Common myeloid progenitor, CD34-positive (primary cell): ENCODE measurements at regions of chr9 and their contacts with region 1.

Region 1: DNA sequence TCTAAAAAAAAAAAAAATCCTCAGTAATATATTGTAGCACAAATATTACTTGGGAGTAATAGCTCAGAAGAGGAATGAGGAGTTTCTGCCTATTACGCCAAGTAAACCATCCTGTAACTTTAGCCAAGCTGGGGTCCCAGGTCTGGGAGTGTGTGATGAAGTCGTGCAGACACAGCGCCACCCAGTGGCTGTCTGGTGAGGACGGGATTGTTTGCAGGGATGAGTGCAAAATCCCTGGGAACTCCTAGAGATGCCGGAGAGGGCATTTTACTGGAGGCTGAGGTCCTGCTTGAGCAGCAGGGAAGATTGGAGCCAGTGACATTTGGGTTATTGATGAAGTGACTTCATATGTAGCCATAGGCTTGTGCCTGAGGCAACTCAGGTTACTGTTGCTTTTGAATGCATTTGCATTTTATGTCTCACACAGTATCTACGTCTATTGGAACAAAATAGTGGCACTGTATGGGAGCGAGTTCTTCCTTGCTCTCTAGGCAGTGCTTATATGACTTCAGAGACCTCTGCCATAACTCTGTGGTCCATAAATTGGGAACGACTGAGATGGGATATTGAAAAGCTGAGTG is 72.8 kb downstream of the PSAT1 start:
- DNase-seq: peak; percentile 47 to 57 (median 50)
- H3K4me3 ChIP-seq: no peak overlapping the region
- H3K27ac ChIP-seq: no peak overlapping the region
- H3K4me1 ChIP-seq: peaks cover 0 to 12% (median 7%) of the 10 kb centered on the region in 4 experiments
- H3K27me3 ChIP-seq: peaks cover 0 to 33% (median 7%) of the 10 kb centered on the region in 5 experiments

Region 2: GRCh38 chr9:78383130-78383529 is 13.4 kb after region 1 on chr9:
- CTCF ChIA-PET with region 1: interaction called, 13 read pairs
- POLR2A ChIA-PET with region 1: no interaction called
- DNase-seq: peak in 2 of 3 donors; percentile 56 to 65
- H3K4me3 ChIP-seq: peak overlapping the region in 3 of 7 experiments; percentile 12 to 37 (median 20)
- H3K27ac ChIP-seq: no peak overlapping the region
- H3K4me1 ChIP-seq: peaks cover 9 to 24% (median 18%) of the 10 kb centered on the region in 4 experiments
- H3K27me3 ChIP-seq: peaks cover 0 to 1% (median 0%) of the 10 kb centered on the region in 5 experiments